IMR-90 (cell line): ENCODE measurements at regions of chr1 and their contacts with region 1.

Region 1: GRCh38 chr1:23539698-23540266 is 8.7 kb upstream of the E2F2 start:
- DNase-seq: peak; percentile 88
- ATAC-seq: peak; percentile 89
- H3K4me3 ChIP-seq: no peak overlapping the region
- H3K27ac ChIP-seq: no peak overlapping the region
- H3K4me1 ChIP-seq: peaks cover 4% of the 10 kb centered on the region; the same call in 1 of the 2 replicates
- H3K27me3 ChIP-seq: no peaks in the 10 kb centered on the region
- CTCF ChIP-seq: peak; percentile 95
- POLR2A ChIP-seq: no peak
- RAD21 ChIP-seq: peak; percentile 92

Region 2: GRCh38 chr1:23184212-23184934 is 355.4 kb before region 1 on chr1:
- CTCF ChIA-PET with region 1: no interaction called
- POLR2A ChIA-PET with region 1: no interaction called
- dilution Hi-C with region 1: no loop called
- in situ Hi-C with region 1: no loop called
- intact Hi-C with region 1: loop called (anchors 10 kb)
- DNase-seq: peak; percentile 41
- ATAC-seq: peak; percentile 51; the same call in 1 of the 2 replicates
- H3K4me3 ChIP-seq: no peak overlapping the region
- H3K27ac ChIP-seq: no peak overlapping the region
- H3K4me1 ChIP-seq: 0 out of 2 replicates have a peak, but pooled peaks cover 4% of the 10 kb centered on the region
- H3K27me3 ChIP-seq: no peaks in the 10 kb centered on the region
- CTCF ChIP-seq: peak; percentile 72
- POLR2A ChIP-seq: no peak
- RAD21 ChIP-seq: peak; percentile 83

Region 3: GRCh38 chr1:23496490-23497181 is 43.1 kb before region 1 on chr1:
- CTCF ChIA-PET with region 1: interaction called, 21 read pairs
- POLR2A ChIA-PET with region 1: no interaction called
- dilution Hi-C with region 1: no loop called
- in situ Hi-C with region 1: no loop called
- intact Hi-C with region 1: loop called (anchors 1 kb)
- DNase-seq: no peak
- ATAC-seq: no peak
- H3K4me3 ChIP-seq: no peak overlapping the region
- H3K27ac ChIP-seq: no peak overlapping the region
- H3K4me1 ChIP-seq: no peaks in the 10 kb centered on the region
- H3K27me3 ChIP-seq: peaks cover 2% of the 10 kb centered on the region
- CTCF ChIP-seq: no peak
- POLR2A ChIP-seq: no peak
- RAD21 ChIP-seq: no peak

Region 4: DNA sequence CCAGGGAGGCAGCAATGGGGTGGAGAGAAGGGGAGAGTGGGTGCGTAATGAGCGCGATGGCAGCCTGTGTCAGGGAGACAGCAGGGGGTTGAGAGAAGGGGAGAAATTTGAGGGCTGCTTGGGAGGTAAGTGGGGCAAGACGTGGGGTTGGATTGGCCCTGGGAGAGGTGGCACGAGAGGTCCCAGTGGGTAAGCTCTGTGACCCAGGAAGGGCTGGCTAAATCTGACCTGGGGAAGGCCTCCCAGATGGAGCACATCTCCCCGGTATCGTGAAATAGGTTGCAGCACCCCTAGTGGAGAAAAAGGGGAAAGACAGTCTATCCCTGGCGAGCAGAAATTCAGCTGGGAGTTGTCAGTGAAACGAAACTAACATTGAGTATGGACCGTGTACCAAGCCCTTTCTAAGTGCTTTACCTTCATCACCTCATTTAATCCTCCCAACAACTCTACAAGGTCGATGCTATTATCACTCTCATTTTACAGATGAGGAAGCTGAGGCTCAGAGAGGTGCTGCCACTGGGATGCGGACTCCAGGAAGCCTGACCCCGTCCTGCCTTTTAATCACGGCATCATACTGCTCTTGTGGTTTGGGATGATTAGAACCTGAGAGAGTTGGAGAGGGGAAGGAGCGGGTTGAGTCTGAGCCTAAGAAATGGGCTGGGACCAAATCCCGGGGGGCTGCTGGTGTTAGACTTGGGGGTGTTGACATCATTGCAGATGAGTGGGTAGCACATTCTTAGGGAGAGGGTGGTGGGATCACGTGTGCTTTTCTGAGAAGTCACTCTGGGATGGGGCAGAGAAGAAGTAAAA is 95.3 kb after region 1 on chr1:
- CTCF ChIA-PET with region 1: interaction called, 49 read pairs
- POLR2A ChIA-PET with region 1: no interaction called
- dilution Hi-C with region 1: no loop called
- in situ Hi-C with region 1: no loop called
- intact Hi-C with region 1: loop called (anchors 1 kb)
- DNase-seq: peak; percentile 77
- ATAC-seq: peak; percentile 88
- H3K4me3 ChIP-seq: peak overlapping the region; percentile 66
- H3K27ac ChIP-seq: peak overlapping the region; percentile 90
- H3K4me1 ChIP-seq: peaks cover 10% of the 10 kb centered on the region
- H3K27me3 ChIP-seq: no peaks in the 10 kb centered on the region; the same call in 1 of the 2 replicates
- CTCF ChIP-seq: peak; percentile 94
- POLR2A ChIP-seq: peak; percentile 51; the same call in 1 of the 2 replicates
- RAD21 ChIP-seq: peak; percentile 72